Activated CD8-positive, alpha-beta memory T cell treated with anti-CD3 and anti-CD28 coated beads, Interleukin-2, amount 10 ng/mL, durations not matched to agents 7 days and 5 days (primary cell): ENCODE measurements at regions of chr3 and their contacts with region 1.

Region 1: DNA sequence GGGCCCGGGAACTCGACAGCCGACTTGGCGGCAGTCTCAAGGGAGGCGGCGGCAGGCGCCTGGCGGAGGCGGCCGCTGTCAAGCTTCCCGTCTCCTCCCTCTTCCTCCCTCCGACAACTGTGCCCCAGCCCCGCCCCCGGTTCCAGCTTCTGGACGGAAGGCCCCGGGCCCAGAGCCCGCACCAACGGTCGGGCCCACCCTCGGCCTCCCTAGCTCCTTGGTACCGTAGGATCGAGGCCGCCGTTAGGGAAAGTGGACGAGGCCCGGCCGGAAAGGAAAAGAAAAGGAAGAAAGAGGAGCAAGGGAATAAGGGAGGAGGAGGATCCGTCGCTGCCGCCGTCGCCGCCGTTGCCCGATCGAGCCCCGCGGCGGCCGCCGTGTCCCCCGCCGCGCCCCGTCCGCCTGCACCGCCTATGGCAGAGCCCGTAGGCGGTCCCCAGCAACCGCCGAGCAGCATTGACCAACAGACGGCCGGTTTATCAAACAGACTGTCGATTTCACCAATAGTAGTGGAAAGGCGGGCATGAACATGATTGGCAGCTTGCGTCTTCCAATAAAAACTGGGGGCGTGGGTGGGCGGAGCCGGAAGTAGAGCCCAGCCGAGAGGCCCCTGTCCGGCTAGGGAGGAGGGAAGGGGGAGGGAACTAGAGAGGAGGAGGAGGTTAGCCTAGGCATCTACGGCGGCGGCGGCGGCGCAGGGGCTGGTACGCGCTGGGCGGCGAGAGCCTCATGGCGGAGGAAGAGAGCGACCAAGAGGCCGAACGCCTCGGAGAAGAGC is at the starts of genes CGGBP1 and ZNF654:
- DNase-seq: peak; percentile 99
- ATAC-seq: peak; percentile 94
- H3K4me3 Mint-ChIP-seq: peak within 1 kb of the TSS; percentile 98
- H3K27ac Mint-ChIP-seq: peak within 1 kb of the TSS; percentile 92
- H3K4me1 Mint-ChIP-seq: peaks cover 52% of the 10 kb centered on the region
- H3K27me3 Mint-ChIP-seq: no peaks in the 10 kb centered on the region
- total RNA-seq, gene CGGBP1: 96.1 to 98.9 TPM
- total RNA-seq, gene ZNF654: 18.5 to 22.0 TPM

Region 2: GRCh38 chr3:88031642-88032077 is 27.1 kb before region 1 on chr3:
- CTCF ChIA-PET with region 1: interaction called, 10 read pairs
- DNase-seq: peak; percentile 47
- ATAC-seq: peak; percentile 96
- H3K4me3 Mint-ChIP-seq: peak overlapping the region; percentile 81
- H3K27ac Mint-ChIP-seq: peak overlapping the region; percentile 83
- H3K4me1 Mint-ChIP-seq: peaks cover 30% of the 10 kb centered on the region
- H3K27me3 Mint-ChIP-seq: no peaks in the 10 kb centered on the region

Region 3: DNA sequence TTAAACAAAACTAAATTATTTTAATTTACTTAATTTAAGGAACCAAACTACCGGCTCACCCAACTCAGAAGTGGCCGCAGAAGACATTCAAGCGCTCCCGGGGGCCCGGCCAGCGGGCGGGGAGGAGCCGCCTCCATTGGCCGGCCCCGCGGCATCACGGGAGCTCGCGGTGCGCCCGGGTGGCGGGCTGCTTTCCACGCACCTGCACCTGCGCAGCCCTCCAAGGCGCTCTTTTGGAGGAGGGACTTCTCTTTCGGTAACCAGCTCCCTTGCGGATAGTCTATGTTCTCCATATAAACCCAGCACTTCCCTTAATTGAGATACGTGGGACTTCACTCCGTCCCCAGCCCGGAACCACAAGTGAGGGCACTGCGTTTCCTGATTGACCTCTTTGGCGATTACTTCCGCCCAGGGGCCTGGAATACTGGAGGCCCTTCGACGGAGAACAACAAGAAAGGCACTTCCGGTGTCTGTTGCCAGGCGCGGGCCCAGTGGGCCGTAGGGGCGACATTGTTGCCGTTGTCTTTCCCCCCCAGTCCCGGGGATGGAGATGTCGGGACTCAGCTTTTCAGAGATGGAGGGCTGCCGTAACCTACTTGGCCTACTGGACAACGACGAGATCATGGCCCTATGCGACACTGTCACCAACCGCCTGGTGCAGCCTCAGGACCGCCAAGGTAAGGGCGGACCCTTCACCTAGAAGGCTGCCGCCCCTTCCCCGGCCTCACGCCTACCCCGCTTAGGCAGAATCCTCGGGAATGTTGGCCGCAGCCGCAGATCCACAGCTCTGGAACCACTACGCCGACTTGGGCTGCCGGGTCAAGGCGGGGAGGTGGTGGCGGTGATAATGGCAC is 91.0 kb after region 1 on chr3 and contains the start of gene C3orf38:
- CTCF ChIA-PET with region 1: interaction called, 18 read pairs
- DNase-seq: peak; percentile 88
- ATAC-seq: peak; percentile 93
- H3K4me3 Mint-ChIP-seq: peak within 1 kb of the TSS; percentile 97
- H3K27ac Mint-ChIP-seq: peak within 1 kb of the TSS; percentile 98
- H3K4me1 Mint-ChIP-seq: peaks cover 40% of the 10 kb centered on the region
- H3K27me3 Mint-ChIP-seq: no peaks in the 10 kb centered on the region
- total RNA-seq, gene C3orf38: 31.3 to 34.0 TPM

Region 4: GRCh38 chr3:88725440-88725839 is 666.7 kb after region 1 on chr3:
- CTCF ChIA-PET with region 1: no interaction called
- DNase-seq: no peak
- ATAC-seq: no peak
- H3K4me3 Mint-ChIP-seq: no peak overlapping the region
- H3K27ac Mint-ChIP-seq: no peak overlapping the region
- H3K4me1 Mint-ChIP-seq: no peaks in the 10 kb centered on the region
- H3K27me3 Mint-ChIP-seq: no peaks in the 10 kb centered on the region